ENCODE measurements at regions of chr22 and their contacts with region 1.

Region 1: DNA sequence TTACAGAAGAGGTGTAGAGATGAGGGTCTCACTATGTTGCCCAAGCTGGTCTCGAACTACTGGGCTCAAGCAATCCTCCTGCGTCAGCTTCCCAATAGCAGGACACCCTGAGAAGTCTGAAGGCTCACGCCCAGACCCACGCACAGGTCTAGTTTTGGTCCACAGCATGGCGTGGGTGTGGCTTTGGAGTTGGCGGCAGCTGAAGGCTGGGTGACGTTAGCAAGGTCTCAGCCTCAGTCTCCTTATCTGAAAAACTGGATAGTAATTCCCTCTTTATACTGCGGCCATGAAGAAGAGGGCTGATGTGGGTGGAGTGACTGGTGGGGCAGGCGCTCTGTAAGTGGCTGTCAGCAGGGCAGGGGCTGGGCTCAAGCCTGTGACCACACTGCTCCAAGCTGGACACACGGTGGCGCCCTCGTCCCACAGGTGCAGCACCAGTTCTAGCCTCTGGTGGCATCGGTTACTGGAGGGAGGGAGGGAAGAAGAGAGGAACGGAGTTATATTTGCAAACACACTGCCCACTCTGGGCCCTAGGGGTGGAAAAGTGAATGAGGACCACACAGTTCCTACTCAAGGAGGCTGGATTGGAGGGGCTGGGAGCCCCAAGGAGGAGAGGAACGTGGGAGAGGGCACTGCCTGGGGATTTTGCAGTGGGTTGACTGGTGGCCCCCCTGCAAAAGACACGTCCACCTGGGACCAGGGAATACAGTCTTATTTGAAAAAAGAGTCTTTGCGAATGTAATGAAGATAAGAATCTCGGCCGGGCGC is 19.6 kb upstream of the CARD10 start:
- DNase-seq: peak; percentile 98
- H3K4me3 ChIP-seq: peak overlapping the region in 1 of 8 donors; percentile 5
- H3K27ac ChIP-seq: peak overlapping the region in 3 of 8 donors; percentile 32 to 51 (median 44)
- H3K4me1 ChIP-seq: peaks cover 15 to 40% (median 24%) of the 10 kb centered on the region in 6 donors
- H3K27me3 ChIP-seq: peaks cover 0 to 30% (median 0%) of the 10 kb centered on the region in 7 donors
- CTCF ChIP-seq: peak; percentile 94 to 99 (median 97)
- POLR2A ChIP-seq: no peak

Region 2: DNA sequence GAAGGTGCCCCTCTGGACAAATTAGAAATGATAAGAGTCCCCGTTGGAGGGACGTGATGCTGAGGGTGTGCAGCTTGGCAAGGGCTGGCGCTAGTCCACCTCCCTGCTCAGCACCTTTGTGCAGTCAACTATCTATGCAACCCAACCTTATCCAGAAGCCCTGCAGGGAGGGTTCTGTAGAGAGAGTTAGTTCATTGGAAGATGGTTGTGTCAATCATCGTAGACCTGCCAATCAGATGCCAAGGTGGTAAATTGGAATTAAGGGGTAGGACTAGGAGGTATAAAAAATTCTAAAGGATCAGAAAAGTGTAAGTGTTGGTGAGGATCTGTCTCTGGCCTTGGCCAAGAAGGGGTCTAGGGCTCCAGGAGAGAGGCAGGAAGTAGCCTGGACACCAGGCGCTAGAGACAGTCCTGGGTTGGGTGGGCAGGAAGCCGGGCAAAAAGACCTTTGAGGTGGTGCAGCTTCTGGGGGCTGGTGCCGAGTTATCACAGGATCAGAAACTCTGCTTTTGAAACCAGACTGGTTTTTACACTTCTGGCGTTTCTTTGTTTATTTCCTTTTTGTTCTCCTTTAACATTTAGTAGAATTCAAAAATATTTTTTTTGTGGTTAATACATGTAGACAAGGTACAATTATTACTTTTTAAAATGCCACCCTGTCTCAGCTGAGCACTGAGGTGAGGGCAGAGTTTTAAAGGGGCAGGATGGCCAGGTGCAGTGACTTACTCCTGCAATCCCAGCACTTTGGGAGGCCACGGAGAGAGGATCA is 352.4 kb before region 1 on chr22:
- intact Hi-C with region 1: no loop called
- DNase-seq: peak; percentile 79
- H3K4me3 ChIP-seq: peak overlapping the region in 1 of 8 donors; percentile 49
- H3K27ac ChIP-seq: peak overlapping the region; percentile 51 to 88 (median 82)
- H3K4me1 ChIP-seq: peaks cover 28 to 71% (median 57%) of the 10 kb centered on the region in 6 donors
- H3K27me3 ChIP-seq: no peaks in the 10 kb centered on the region
- CTCF ChIP-seq: no peak
- POLR2A ChIP-seq: no peak

Region 3: DNA sequence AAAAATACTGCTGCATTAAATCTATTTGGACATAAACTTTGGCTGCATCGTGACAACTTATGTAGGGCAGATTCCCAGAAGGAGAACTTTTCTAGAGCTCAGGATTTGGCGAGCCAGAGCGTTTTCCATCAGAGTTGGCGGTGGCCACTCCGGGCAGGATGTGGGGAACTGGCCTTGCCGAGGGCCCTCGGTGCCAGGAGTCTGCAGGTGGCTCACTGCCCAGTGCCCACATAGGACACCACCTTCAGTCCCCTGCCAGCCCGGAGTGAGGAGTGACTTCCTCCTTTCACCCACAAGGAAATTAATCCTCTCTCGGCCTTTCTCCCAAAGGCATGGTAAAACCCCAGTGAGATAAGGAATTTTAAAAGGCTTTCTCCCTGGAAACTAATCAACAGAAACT is 42.7 kb after region 1 on chr22:
- intact Hi-C with region 1: no loop called
- DNase-seq: peak; percentile 84
- H3K4me3 ChIP-seq: no peak overlapping the region
- H3K27ac ChIP-seq: peak overlapping the region in 4 of 8 donors; percentile 16 to 46 (median 30)
- H3K4me1 ChIP-seq: peaks cover 20 to 38% (median 30%) of the 10 kb centered on the region in 6 donors
- H3K27me3 ChIP-seq: peaks cover 0 to 9% (median 0%) of the 10 kb centered on the region in 7 donors
- CTCF ChIP-seq: no peak
- POLR2A ChIP-seq: no peak

Region 4: DNA sequence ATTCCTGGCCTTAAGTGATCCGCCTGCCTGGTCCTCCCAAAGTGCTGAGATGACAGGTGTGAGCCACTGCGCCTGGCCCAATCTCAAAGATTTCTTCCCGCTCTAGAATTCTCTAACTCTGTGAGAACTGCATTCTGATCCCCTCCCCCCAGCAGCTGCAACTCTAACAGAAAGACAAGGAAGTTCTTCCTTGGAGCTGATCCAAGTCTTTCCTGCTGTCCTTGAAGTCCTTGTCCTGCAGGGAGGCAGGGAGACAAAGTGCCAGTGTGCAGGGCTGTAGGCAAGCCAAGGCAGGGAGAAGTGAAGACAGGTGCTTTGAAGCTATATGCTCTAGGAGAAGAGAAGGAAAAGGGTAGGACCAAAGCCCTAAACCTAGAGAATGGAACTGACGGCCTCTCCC is 60.4 kb after region 1 on chr22:
- intact Hi-C with region 1: loop called (anchors 10 kb)
- DNase-seq: no peak
- H3K4me3 ChIP-seq: no peak overlapping the region
- H3K27ac ChIP-seq: no peak overlapping the region
- H3K4me1 ChIP-seq: peaks cover 0 to 13% (median 2%) of the 10 kb centered on the region in 6 donors
- H3K27me3 ChIP-seq: no peaks in the 10 kb centered on the region
- CTCF ChIP-seq: no peak
- POLR2A ChIP-seq: no peak